PC-9 (cell line): ENCODE measurements at regions of chr1 and their contacts with region 1.

Region 1: DNA sequence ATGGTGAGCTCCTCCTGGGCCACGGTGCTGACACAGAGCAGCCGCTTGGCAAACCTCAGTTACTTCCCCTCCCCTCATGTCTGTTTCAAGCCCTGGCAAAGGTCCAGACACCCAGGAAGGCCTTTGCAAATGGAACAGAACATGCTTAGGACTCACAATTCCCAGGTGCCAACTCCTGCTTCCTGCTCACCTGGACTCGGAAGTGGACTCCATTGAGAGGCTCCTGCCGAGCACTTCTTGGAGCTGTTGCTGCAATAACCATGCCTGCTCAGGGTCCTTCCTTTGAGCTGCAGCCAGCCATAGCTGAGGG is 10.7 kb downstream of the DCST2 start:
- DNase-seq: peak in 1 of 2 experiments; percentile 55
- H3K4me3 ChIP-seq: no peak overlapping the region
- H3K27ac ChIP-seq: no peak overlapping the region
- H3K4me1 ChIP-seq: peaks cover 62% of the 10 kb centered on the region
- H3K27me3 ChIP-seq: no peaks in the 10 kb centered on the region
- CTCF ChIP-seq: no peak

Region 2: GRCh38 chr1:154183045-154183915 is 839.6 kb before region 1 on chr1:
- CTCF ChIA-PET with region 1: no interaction called
- POLR2A ChIA-PET with region 1: interaction called, 13 read pairs
- intact Hi-C with region 1: no loop called
- DNase-seq: peak; percentile 97 to 98
- H3K4me3 ChIP-seq: peak overlapping the region; percentile 83
- H3K27ac ChIP-seq: peak overlapping the region; percentile 74
- H3K4me1 ChIP-seq: peaks cover 24% of the 10 kb centered on the region
- H3K27me3 ChIP-seq: no peaks in the 10 kb centered on the region
- CTCF ChIP-seq: no peak

Region 3: GRCh38 chr1:154911691-154912550 is 111.0 kb before region 1 on chr1:
- CTCF ChIA-PET with region 1: no interaction called
- POLR2A ChIA-PET with region 1: no interaction called
- intact Hi-C with region 1: no loop called
- DNase-seq: no peak
- H3K4me3 ChIP-seq: no peak overlapping the region
- H3K27ac ChIP-seq: no peak overlapping the region
- H3K4me1 ChIP-seq: no peaks in the 10 kb centered on the region
- H3K27me3 ChIP-seq: peaks cover 67% of the 10 kb centered on the region
- CTCF ChIP-seq: no peak

Region 4: GRCh38 chr1:154943649-154944400 is 79.1 kb before region 1 on chr1:
- CTCF ChIA-PET with region 1: interaction called, 10 read pairs
- POLR2A ChIA-PET with region 1: no interaction called
- intact Hi-C with region 1: no loop called
- DNase-seq: peak in 1 of 2 experiments; percentile 35
- H3K4me3 ChIP-seq: no peak overlapping the region
- H3K27ac ChIP-seq: no peak overlapping the region
- H3K4me1 ChIP-seq: peaks cover 26% of the 10 kb centered on the region
- H3K27me3 ChIP-seq: no peaks in the 10 kb centered on the region
- CTCF ChIP-seq: peak; percentile 84

Region 5: DNA sequence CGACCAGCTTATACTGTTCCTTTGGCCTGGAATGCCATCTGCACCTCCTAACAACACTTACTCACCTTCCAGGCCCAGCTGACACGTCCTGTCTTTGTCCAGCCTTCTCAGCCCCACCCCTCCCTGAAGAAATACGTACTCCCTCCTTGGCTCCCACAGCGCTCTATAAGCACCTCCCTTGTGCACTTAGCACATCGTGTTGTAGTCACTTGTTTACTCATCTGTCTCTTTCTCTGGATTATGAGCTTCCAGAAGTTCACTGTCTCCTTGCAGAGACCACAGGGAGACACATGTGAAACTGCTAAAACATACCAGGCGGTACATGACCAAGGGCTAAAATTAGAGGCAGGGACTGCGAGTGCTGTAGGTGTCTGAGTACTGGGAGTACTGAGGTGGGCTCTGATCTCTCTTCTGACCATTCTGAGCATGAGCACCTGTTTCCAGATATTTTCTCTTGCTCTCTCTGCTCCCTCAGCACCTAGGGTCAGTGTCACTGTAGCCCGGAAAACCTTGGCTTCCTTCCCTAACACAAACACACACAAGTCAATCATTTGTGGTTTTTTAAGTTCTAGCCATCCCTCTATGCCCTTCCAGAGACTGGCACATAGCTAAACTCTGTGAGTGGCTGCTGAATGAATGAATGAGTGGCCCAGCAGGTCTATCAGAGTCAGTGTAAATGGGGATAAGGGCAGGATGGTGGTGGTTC is 15.9 kb after region 1 on chr1:
- CTCF ChIA-PET with region 1: interaction called, 5 read pairs
- POLR2A ChIA-PET with region 1: interaction called, 3 read pairs
- intact Hi-C with region 1: loop called (anchors 2 kb)
- DNase-seq: peak; percentile 71 to 86
- H3K4me3 ChIP-seq: peak overlapping the region; percentile 11; the same call in 1 of the 2 replicates
- H3K27ac ChIP-seq: peak overlapping the region; percentile 53
- H3K4me1 ChIP-seq: peaks cover 28% of the 10 kb centered on the region
- H3K27me3 ChIP-seq: no peaks in the 10 kb centered on the region
- CTCF ChIP-seq: no peak

Region 6: DNA sequence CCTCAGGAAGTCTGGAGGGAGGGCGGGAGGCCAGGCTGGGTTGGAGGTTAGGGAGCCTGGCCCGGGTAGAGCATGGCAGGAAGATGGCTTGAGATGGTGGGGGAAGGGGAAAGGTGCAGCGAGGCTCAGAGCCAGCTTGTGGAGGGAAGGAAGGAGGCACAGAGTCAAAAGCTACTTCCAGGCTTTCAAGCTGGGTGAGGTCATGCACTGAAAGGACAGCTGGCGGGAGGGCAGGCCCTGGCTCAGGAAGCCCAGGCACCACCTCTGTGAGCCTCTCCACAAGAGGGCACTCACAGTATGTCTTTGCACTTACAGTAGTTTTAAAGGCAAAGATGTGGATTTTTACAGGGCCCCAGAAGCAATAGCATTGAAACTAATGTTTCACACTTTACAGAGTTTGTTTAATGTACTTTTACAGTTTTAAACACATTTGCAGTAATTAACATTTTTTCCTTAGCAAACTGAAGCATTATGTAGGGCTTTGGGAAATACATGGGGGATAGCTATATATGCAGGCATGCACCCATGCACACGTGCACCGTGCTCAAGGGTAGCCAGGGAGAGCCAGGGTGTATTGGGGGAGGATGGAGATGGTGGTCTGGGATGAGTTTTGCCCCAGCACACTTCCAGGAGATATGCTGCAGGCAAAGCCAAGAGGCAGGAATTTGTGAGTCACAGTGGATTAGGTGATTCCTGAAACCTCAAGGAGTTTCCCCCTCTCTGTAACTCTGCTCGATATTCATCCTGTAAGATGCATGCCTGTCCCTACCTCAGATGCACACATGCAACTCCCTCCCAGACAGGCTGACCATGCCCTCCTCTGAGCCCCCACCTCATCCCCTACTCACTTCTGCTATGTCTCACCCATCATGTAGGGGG is 22.2 kb after region 1 on chr1:
- CTCF ChIA-PET with region 1: interaction called, 13 read pairs
- POLR2A ChIA-PET with region 1: interaction called, 5 read pairs
- intact Hi-C with region 1: no loop called
- DNase-seq: peak; percentile 79
- H3K4me3 ChIP-seq: no peak overlapping the region
- H3K27ac ChIP-seq: no peak overlapping the region
- H3K4me1 ChIP-seq: peaks cover 24% of the 10 kb centered on the region
- H3K27me3 ChIP-seq: no peaks in the 10 kb centered on the region
- CTCF ChIP-seq: peak; percentile 73

Region 7: DNA sequence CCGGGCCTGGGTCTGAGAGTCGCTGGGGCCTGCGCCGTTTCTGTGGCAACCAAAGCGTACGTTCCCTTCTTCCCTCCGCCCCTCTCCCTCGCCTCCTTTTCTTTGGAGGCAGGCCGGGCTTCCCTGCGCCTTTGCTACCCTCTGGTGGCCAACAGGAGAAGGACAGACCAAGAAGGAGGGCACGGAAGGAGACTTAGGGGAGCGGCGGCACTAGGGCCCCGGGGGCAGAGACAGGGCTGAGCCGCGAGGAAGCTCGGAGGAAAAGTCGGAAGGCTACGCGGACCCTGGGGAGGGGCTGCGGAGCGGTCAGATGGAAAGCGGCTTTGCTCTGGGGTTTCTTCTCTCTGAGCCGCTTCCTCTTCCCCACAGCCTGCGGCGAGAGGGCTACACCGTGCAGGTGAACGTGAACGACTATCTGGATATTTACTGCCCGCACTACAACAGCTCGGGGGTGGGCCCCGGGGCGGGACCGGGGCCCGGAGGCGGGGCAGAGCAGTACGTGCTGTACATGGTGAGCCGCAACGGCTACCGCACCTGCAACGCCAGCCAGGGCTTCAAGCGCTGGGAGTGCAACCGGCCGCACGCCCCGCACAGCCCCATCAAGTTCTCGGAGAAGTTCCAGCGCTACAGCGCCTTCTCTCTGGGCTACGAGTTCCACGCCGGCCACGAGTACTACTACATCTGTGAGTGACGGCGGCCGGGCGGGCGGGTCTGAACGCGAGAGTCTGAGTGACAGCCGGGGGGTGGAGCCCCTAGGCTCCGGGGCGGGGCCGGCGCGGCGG is 62.0 kb after region 1 on chr1:
- CTCF ChIA-PET with region 1: no interaction called
- POLR2A ChIA-PET with region 1: no interaction called
- intact Hi-C with region 1: no loop called
- DNase-seq: peak; percentile 81 to 92
- H3K4me3 ChIP-seq: peak overlapping the region; percentile 70
- H3K27ac ChIP-seq: peak overlapping the region; percentile 72
- H3K4me1 ChIP-seq: peaks cover 50% of the 10 kb centered on the region
- H3K27me3 ChIP-seq: peaks cover 23% of the 10 kb centered on the region
- CTCF ChIP-seq: peak; percentile 94

Region 8: DNA sequence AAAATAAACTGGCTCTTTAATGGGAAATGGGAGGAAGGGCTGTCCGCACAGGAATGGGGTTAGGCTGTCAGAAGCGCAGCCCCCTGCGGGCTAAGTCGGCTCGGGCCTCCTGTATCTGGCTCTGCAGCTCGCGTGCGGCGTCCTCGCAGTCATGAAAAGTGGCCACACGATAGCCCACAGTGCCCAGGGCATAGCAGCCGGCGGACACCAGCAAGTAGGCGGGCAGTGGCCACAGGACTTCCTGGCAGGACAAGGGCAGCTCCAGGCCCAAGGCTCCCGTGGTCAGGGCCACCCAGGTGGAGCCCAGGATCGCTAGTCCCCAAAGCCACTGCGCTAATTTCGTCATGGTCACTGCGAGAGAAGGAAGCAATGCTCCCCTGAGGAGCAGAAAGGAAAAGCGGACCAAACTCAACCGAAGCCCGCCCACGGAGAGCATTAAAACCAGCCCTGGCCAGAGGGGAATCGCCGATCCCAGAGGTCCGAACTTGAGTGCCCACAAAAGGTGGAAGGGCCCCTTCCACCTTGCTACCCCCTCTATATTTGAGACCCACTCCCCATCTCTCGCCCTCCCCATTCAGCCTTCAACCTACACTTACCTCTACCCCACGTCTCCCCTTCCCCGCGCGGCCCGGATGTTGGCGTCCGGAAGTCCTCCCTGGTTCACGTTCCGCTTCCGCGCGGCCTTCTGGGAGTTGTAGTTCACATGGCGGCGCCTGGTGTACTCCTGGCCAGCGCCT is 117.2 kb after region 1 on chr1 and contains the start of gene DPM3:
- CTCF ChIA-PET with region 1: no interaction called
- POLR2A ChIA-PET with region 1: no interaction called
- intact Hi-C with region 1: no loop called
- DNase-seq: peak; percentile 63 to 74
- H3K4me3 ChIP-seq: peak within 1 kb of the TSS; percentile 64
- H3K27ac ChIP-seq: peak within 1 kb of the TSS; percentile 67
- H3K4me1 ChIP-seq: peaks cover 21% of the 10 kb centered on the region
- H3K27me3 ChIP-seq: no peaks in the 10 kb centered on the region
- CTCF ChIP-seq: no peak
- total RNA-seq, gene DPM3: 83.7 and 127 TPM in 2 replicates